Motor neuron (in vitro differentiated cells): ENCODE measurements at regions of chr1 and their contacts with region 1.

Region 1: DNA sequence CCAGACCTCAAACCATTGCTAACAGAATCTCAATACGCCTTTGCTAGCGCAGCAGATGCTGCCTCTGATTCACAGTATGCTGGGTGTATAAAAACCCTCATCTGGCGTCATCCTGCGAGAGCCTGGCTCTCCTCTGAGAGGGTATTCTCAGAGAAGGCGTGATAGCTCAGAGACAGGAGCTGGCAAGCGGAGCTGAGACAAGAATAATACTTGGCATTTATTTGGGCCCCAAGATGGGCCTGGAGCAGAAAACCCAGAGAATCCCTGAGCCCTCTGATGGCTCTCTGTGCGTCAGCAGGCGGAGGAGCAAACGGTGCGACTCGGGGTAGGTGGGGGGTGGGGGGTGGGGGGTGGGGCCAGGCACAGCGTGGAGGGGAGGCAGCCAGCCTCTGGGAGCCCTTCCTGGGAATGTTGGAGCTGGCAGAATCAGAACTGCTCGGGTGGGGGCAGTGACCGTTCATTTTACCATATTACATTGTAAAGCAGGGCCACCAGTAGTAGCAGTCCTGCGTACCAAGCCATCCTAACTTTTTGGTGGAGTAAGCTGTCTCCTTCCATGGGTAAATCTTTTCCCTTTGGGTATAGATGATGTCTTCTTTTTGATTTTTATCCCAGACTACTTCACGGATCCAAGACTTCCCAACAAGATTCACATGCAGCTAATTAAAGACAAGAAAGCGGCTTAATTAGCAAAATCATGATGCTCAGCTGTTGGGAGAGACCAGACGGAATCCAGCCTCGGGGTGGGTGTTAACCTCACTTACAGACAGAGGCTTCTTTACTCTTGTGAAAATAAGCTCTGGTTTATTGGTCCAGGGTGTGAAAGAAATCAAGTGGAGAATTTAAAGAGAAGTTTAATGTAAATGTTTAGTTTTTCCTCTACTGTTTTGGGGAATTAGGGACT is 7.1 kb downstream of the RIIAD1 start:
- ATAC-seq: peak; percentile 87 to 97 (median 94)
- H3K4me3 ChIP-seq: peak overlapping the region in 3 of 5 donors; percentile 10 to 14 (median 11)
- H3K27ac ChIP-seq: peak overlapping the region; percentile 52 to 75
- H3K4me1 ChIP-seq: peaks cover 23 to 28% of the 10 kb centered on the region in 2 donors

Region 2: GRCh38 chr1:151443846-151444782 is 284.3 kb before region 1 on chr1:
- in situ Hi-C with region 1: loop called in 1 of 9 experiments (anchors 25 kb)
- ATAC-seq: peak; percentile 70 to 99 (median 82)
- H3K4me3 ChIP-seq: no peak overlapping the region
- H3K27ac ChIP-seq: no peak overlapping the region
- H3K4me1 ChIP-seq: no peaks in the 10 kb centered on the region

Region 3: GRCh38 chr1:151594143-151594625 is 134.2 kb before region 1 on chr1:
- in situ Hi-C with region 1: loop called in 1 of 9 experiments (anchors 25 kb)
- ATAC-seq: peak; percentile 61 to 90 (median 80)
- H3K4me3 ChIP-seq: no peak overlapping the region
- H3K27ac ChIP-seq: no peak overlapping the region
- H3K4me1 ChIP-seq: peaks cover 0 to 2% of the 10 kb centered on the region in 2 donors